ENCODE measurements at regions of chr1 and their contacts with region 1.

Region 1: DNA sequence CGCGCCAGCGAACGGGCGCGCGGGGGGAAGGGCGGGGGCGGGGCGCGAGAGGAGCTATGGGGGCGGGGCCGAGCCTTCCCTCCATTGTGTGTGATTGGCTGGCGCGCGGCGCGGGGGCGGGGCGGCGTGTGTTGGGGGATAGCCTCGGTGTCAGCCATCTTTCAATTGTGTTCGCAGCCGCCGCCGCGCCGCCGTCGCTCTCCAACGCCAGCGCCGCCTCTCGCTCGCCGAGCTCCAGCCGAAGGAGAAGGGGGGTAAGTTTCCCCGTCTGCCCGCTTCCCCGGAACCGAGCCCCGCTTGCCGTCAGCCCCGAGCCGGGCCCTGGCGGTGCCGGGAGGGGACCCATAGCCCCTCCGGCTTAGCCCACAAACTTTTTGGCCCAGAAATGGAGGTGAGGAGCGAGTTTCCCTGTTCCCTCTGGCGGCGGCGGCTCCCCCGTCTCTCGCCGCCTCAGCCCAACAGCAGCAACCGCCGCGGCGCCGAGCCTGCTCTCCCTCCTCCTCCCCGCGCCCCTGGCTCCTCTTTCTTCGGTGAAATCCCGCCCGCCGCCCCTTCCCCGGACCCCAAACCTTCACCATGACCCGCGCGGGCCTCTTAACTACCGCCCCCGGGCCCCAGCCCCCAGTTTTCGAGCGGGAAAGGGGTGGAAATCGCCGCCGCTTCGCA is at the start of gene H3-3A:
- DNase-seq: peak; percentile 95 to 98 (median 96)
- H3K4me3 ChIP-seq: peak within 1 kb of the TSS; percentile 70 to 98 (median 88)
- H3K27ac ChIP-seq: peak within 1 kb of the TSS; percentile 96 to 100 (median 100)
- H3K27me3 ChIP-seq: no peaks in the 10 kb centered on the region
- CTCF ChIP-seq: peak in 42 of 56 donors; percentile 10 to 54 (median 36)
- total RNA-seq, gene H3-3A: 134 to 298 (median 177) TPM

Region 2: GRCh38 chr1:225428068-225428880 is 634.4 kb before region 1 on chr1:
- intact Hi-C with region 1: loop called (anchors 5 kb)
- DNase-seq: peak; percentile 88 to 98 (median 93)
- H3K4me3 ChIP-seq: peak overlapping the region; percentile 68 to 99 (median 91)
- H3K27ac ChIP-seq: peak overlapping the region; percentile 67 to 97 (median 93)
- H3K27me3 ChIP-seq: no peaks in the 10 kb centered on the region
- CTCF ChIP-seq: peak in 7 of 56 donors; percentile 2 to 28 (median 6)

Region 3: DNA sequence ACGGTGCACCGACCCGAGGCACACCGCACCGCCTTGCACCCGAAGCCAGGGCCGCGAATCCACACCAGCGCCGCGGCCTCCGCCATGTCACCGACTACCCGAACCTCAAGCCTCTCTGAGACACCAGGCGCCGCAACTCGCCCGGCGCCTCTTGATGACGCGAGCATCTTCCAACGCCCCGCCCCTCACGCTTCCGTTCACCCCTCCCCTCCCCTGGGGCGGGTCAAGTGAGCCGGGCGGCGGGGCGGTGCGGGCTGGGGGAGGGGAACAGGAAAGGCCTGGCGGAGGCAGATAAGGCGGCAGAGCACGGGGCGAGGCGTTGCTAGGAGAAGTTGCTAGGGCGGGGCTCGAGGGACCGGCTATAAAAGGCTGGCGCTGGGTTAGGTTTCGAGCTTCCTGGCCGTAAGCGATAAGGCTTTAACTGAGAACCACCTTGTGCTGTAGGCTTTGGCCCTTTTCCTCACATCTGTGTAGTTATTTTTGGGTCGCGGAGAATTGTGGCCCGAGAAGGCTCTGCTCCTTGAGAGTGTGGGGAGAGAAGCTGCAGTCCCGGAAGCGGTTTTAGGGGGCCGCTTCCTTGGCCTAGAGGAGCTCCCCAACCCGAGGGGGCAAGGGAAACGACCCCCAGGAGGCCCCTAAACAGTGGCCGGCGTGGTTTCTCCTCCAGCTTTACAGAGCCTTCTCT is 63.3 kb before region 1 on chr1 and contains the start of gene SDE2:
- intact Hi-C with region 1: loop called (anchors 1 kb)
- DNase-seq: peak; percentile 98 to 100 (median 99)
- H3K4me3 ChIP-seq: peak within 1 kb of the TSS; percentile 56 to 100 (median 88)
- H3K27ac ChIP-seq: peak within 1 kb of the TSS; percentile 75 to 100 (median 97)
- H3K27me3 ChIP-seq: no peaks in the 10 kb centered on the region
- CTCF ChIP-seq: peak in 51 of 56 donors; percentile 3 to 68 (median 39)
- total RNA-seq, gene SDE2: 10.8 to 22.0 (median 14.6) TPM

Region 4: DNA sequence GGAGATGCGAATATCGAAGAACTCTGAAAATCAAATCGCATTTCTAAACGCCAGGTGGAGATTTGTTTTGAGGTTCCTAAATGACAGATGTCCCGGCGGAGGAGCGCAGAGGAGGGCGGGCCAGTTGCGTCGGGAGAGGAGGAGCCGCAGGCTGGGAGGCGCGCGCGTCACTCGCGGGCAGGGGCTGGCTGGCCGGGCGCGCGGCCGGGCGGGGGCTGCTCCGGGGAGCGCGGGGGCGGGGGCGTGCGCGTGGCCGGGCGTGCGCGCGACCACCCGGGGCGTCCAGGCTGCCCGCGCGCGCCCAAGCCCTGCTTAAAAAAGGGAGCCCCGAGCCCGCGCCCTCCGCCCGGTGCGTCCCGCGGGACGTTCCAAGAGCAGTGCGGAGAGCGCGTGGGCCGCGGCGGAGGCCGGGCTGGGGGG is 47.1 kb after region 1 on chr1:
- intact Hi-C with region 1: loop called (anchors 1 kb)
- DNase-seq: peak; percentile 76 to 93 (median 92)
- H3K4me3 ChIP-seq: peak overlapping the region; percentile 59 to 93 (median 73)
- H3K27ac ChIP-seq: peak overlapping the region; percentile 84 to 99 (median 98)
- H3K27me3 ChIP-seq: no peaks in the 10 kb centered on the region
- CTCF ChIP-seq: peak in 22 of 56 donors; percentile 7 to 48 (median 27)

Region 5: GRCh38 chr1:226186124-226187018 is 123.7 kb after region 1 on chr1 and contains the start of gene ACBD3:
- intact Hi-C with region 1: loop called (anchors 5 to 10 kb)
- DNase-seq: peak; percentile 77 to 95 (median 90)
- H3K4me3 ChIP-seq: peak within 1 kb of the TSS; percentile 57 to 100 (median 92)
- H3K27ac ChIP-seq: peak within 1 kb of the TSS; percentile 65 to 96 (median 87)
- H3K27me3 ChIP-seq: no peaks in the 10 kb centered on the region
- CTCF ChIP-seq: peak in 31 of 56 donors; percentile 10 to 46 (median 33)
- total RNA-seq, gene ACBD3: 22.6 to 41.8 (median 29.5) TPM

Measured in dorsolateral prefrontal cortex (tissue), 120 donors.